ENCODE measurements at regions of chr12 and their contacts with region 1.

Region 1: GRCh38 chr12:49673446-49674317 is 33.5 kb downstream of the FMNL3 start:
- DNase-seq: peak; percentile 36
- CTCF ChIP-seq: no peak

Region 2: GRCh38 chr12:49553512-49554088 is 120.1 kb before region 1 on chr12:
- CTCF ChIA-PET with region 1: no interaction called
- POLR2A ChIA-PET with region 1: no interaction called
- DNase-seq: peak; percentile 67
- CTCF ChIP-seq: peak; percentile 56

Region 3: GRCh38 chr12:49644620-49644994 is 29.1 kb before region 1 on chr12:
- CTCF ChIA-PET with region 1: interaction called, 29 read pairs
- POLR2A ChIA-PET with region 1: no interaction called
- DNase-seq: peak; percentile 87
- CTCF ChIP-seq: peak; percentile 88

Region 4: GRCh38 chr12:49651855-49652254 is 21.8 kb before region 1 on chr12:
- CTCF ChIA-PET with region 1: interaction called, 25 read pairs
- POLR2A ChIA-PET with region 1: no interaction called
- DNase-seq: no peak
- CTCF ChIP-seq: no peak

Region 5: GRCh38 chr12:49662998-49663843 is 10.5 kb before region 1 on chr12:
- CTCF ChIA-PET with region 1: interaction called, 35 read pairs
- POLR2A ChIA-PET with region 1: no interaction called
- DNase-seq: peak; percentile 87
- CTCF ChIP-seq: no peak

Region 6: DNA sequence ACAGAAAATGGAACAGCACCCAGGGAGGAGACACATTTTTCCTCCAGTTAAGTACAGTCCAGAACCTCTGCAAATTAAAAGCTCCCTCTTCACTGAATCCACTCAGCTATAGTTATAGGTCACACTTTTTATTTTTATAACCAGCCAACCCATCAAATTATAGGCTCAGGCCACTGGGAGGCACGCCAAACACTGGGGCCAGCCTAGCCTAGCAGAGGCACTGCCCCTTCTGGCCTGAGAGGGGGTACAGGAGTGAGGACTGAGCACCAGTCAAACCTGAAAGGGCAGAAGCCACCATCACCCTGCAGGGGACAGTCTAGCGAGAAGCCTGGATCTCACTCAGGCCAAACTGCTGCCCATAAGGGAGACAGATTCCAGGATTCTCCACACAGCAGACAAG is 14.3 kb after region 1 on chr12:
- CTCF ChIA-PET with region 1: interaction called, 93 read pairs
- POLR2A ChIA-PET with region 1: no interaction called
- DNase-seq: no peak
- CTCF ChIP-seq: no peak

Region 7: GRCh38 chr12:49707128-49707811 is 33.6 kb after region 1 on chr12 and contains the start of gene FMNL3:
- CTCF ChIA-PET with region 1: interaction called, 131 read pairs
- POLR2A ChIA-PET with region 1: interaction called, 22 read pairs
- DNase-seq: peak; percentile 99
- CTCF ChIP-seq: peak; percentile 91

Measured in GM10248 (cell line).